ENCODE measurements at regions of chr3 and their contacts with region 1.

Region 1: GRCh38 chr3:162540421-162540820 is 1043.8 kb downstream of the OTOL1 start:
- DNase-seq: no peak
- H3K4me3 ChIP-seq: no peak overlapping the region
- H3K27ac ChIP-seq: no peak overlapping the region
- H3K4me1 ChIP-seq: no peaks in the 10 kb centered on the region
- H3K27me3 ChIP-seq: no peaks in the 10 kb centered on the region
- CTCF ChIP-seq: no peak
- EP300 ChIP-seq: no peak
- POLR2A ChIP-seq: no peak

Region 2: GRCh38 chr3:162610261-162610660 is 69.8 kb after region 1 on chr3:
- intact Hi-C with region 1: no loop called
- DNase-seq: no peak
- H3K4me3 ChIP-seq: no peak overlapping the region
- H3K27ac ChIP-seq: no peak overlapping the region
- H3K4me1 ChIP-seq: no peaks in the 10 kb centered on the region
- H3K27me3 ChIP-seq: no peaks in the 10 kb centered on the region
- CTCF ChIP-seq: no peak
- EP300 ChIP-seq: no peak
- POLR2A ChIP-seq: no peak

Region 3: GRCh38 chr3:164179110-164179774 is 1638.8 kb after region 1 on chr3:
- intact Hi-C with region 1: loop called in 1 of 4 experiments (anchors 10 kb)
- DNase-seq: no peak
- H3K4me3 ChIP-seq: no peak overlapping the region
- H3K27ac ChIP-seq: no peak overlapping the region
- H3K4me1 ChIP-seq: no peaks in the 10 kb centered on the region
- H3K27me3 ChIP-seq: no peaks in the 10 kb centered on the region
- CTCF ChIP-seq: no peak
- EP300 ChIP-seq: no peak
- POLR2A ChIP-seq: no peak

Measured in ovary (tissue), 10 donors.